ENCODE measurements at regions of chr2 and their contacts with region 1.

Region 1: GRCh38 chr2:113138428-113139322 is 11.3 kb downstream of the IL1RN start:
- DNase-seq: no peak
- ATAC-seq: peak; percentile 31

Region 2: GRCh38 chr2:113198790-113199612 is 60.3 kb after region 1 on chr2:
- intact Hi-C with region 1: loop called (anchors 1 kb)
- DNase-seq: peak; percentile 93
- ATAC-seq: peak; percentile 95

Region 3: GRCh38 chr2:113370478-113371091 is 231.9 kb after region 1 on chr2:
- intact Hi-C with region 1: loop called (anchors 5 kb)
- DNase-seq: no peak
- ATAC-seq: peak; percentile 86

Region 4: GRCh38 chr2:113390124-113390849 is 251.6 kb after region 1 on chr2:
- intact Hi-C with region 1: loop called (anchors 5 kb)
- DNase-seq: no peak
- ATAC-seq: peak; percentile 78

Measured in Right ventricle myocardium inferior (tissue), 1 donor.